ENCODE measurements at regions of chr2 and their contacts with region 1.

Region 1: DNA sequence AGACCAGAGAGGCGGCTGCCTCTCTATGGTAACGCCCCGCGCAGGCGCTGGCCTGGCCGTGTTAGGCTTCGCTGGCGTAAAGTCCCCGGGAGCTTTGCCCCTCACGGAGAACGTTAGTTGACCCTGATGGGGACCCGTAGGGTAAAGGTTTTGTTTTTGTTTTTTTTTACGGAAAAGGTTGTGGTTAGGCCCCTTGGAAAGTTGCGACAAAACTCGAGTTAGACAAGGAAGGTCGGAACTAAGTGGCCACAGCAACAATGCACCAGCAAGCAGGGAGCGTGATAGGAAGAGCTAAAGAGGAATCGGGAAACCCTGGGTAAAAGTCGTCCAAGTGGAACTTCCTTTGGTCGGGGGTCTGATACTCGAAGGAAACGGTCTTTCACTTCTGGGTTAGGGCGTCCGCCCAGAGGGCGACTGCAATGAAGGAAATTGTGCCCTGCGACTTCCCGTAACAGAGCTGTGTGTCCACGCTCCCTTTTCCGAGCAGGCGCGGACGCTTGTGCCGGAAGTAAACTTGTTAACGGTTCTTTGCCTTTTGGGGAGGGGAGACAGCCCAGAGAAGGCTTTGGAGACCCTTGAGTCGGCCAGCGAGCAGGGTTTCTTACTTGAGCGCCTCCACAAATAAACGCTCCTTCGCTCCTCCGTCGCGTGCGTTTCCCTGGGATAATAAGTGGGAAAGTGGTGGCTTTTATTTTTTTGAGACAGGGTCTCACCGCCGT is 493 bp upstream of the CLASP1 start:
- DNase-seq: peak; percentile 98
- ATAC-seq: peak; percentile 93
- H3K4me3 ChIP-seq: peak overlapping the region; percentile 87 to 99 (median 95)
- H3K4me3 Mint-ChIP-seq: peak overlapping the region; percentile 95
- H3K27ac ChIP-seq: peak overlapping the region; percentile 82 to 98
- H3K27ac Mint-ChIP-seq: peak overlapping the region; percentile 98
- H3K4me1 ChIP-seq: peaks cover 21 to 24% of the 10 kb centered on the region in 2 donors
- H3K4me1 Mint-ChIP-seq: peaks cover 50% of the 10 kb centered on the region
- H3K27me3 ChIP-seq: no peaks in the 10 kb centered on the region
- H3K27me3 Mint-ChIP-seq: no peaks in the 10 kb centered on the region
- CTCF ChIP-seq: no peak

Region 2: GRCh38 chr2:121570036-121570666 is 79.6 kb before region 1 on chr2:
- CTCF ChIA-PET with region 1: no interaction called
- POLR2A ChIA-PET with region 1: no interaction called
- intact Hi-C with region 1: no loop called
- DNase-seq: no peak
- ATAC-seq: no peak
- H3K4me3 ChIP-seq: no peak overlapping the region
- H3K4me3 Mint-ChIP-seq: no peak overlapping the region
- H3K27ac ChIP-seq: no peak overlapping the region
- H3K27ac Mint-ChIP-seq: no peak overlapping the region
- H3K4me1 ChIP-seq: no peaks in the 10 kb centered on the region
- H3K4me1 Mint-ChIP-seq: peaks cover 2% of the 10 kb centered on the region
- H3K27me3 ChIP-seq: no peaks in the 10 kb centered on the region
- H3K27me3 Mint-ChIP-seq: no peaks in the 10 kb centered on the region
- CTCF ChIP-seq: no peak

Region 3: DNA sequence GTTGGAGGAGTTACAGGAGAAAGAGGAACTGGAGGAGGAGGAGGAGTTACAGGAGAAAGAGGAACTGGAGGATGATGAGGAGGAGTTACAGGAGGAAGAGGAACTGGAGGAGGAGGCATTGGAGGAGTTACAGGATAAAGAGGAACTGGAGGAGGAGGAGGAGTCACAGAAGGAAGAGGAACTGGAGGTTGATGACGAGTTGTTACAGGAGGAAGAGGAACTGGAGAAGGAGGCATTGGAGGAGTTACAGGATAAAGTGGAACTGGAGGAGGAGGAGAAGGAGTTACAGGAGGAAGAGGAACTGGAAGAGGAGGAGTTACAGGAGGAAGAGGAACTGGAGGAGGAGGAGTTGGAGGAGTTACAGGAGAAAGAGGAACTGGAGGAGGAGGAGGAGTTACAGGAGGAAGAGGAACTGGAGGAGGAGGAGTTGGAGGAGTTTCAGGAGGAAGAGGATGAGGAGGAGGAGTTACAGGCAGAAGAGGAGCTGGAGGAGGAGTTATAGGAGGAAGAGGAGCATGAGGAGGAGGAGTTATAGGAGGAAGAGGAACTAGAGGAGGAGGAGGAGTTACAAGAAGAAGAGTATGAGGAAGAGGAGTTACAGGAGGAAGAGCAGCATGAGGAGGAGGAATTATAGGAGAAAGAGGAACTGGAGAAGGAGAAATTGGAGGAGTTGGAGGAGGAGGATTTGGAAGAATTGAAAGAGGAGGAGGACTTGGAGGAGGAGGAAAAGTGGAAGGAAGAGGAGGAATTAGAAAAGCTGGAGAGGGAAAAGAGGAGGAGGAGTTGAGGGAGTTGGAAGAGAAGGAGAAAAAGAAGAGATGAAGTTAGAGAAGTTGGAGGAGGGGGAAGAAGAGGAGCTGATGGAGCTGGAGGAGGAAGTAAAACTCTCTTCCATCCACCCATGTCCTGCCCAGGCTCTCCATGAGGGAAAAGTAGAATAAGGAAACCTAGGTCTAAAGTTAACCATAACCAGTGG is 37.7 kb before region 1 on chr2:
- CTCF ChIA-PET with region 1: interaction called, 3 read pairs
- POLR2A ChIA-PET with region 1: interaction called, 3 read pairs
- intact Hi-C with region 1: loop called (anchors 1 kb)
- DNase-seq: peak; percentile 80
- ATAC-seq: peak; percentile 41
- H3K4me3 ChIP-seq: peak overlapping the region in 1 of 5 experiments; percentile 37
- H3K4me3 Mint-ChIP-seq: no peak overlapping the region
- H3K27ac ChIP-seq: peak overlapping the region; percentile 51 to 72
- H3K27ac Mint-ChIP-seq: no peak overlapping the region
- H3K4me1 ChIP-seq: peaks cover 7 to 8% of the 10 kb centered on the region in 2 donors
- H3K4me1 Mint-ChIP-seq: peaks cover 17% of the 10 kb centered on the region
- H3K27me3 ChIP-seq: no peaks in the 10 kb centered on the region
- H3K27me3 Mint-ChIP-seq: no peaks in the 10 kb centered on the region
- CTCF ChIP-seq: no peak

Region 4: DNA sequence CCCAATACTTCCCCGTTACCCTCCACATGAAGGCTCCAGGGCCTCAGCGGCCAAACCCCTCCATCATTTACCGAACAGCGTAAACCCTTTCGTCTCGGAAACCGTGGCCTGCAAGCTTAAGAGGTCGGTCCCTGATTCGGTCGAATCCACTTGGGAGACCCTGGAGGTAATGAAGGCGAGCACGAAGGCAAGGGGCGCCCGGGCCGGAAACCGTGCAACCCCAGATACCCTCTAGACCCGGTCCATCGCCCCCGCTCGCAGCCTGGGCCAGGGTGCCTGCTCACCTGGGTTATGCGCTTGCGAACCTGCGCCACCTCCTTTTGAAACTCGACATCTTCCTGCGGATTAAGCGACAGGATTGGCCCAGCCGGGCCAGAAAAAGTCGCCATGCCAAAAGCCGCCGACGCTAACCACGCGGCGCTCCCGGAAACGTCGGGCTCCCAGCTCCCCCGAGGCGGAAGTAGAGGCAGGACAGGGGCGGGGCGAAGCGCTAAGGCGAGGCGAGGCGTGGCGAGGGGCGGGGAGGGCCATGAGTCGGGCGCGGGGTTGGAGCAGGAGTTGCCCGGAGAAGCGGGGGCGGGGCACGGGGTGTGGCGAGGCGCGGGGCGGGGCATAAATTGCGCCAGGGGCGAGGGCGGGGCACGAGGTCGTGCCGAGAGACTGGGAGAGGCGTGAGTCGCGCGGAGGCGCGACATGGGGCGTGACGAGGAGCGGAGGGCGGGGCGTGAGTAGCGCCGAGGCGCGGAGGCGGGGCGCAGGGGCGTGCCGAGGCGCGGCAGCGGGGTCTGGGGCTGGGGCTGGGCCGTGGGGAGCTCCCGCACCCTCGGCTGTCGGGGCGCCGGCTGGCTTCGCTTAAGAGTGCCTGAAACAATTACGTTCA is 86.9 kb after region 1 on chr2 and contains the start of gene NIFK:
- CTCF ChIA-PET with region 1: no interaction called
- POLR2A ChIA-PET with region 1: interaction called, 34 read pairs
- intact Hi-C with region 1: loop called (anchors 1 kb)
- DNase-seq: peak; percentile 99
- ATAC-seq: peak; percentile 95
- H3K4me3 ChIP-seq: peak within 1 kb of the TSS; percentile 84 to 99 (median 98)
- H3K4me3 Mint-ChIP-seq: peak within 1 kb of the TSS; percentile 97
- H3K27ac ChIP-seq: peak within 1 kb of the TSS; percentile 59 to 92
- H3K27ac Mint-ChIP-seq: peak within 1 kb of the TSS; percentile 93
- H3K4me1 ChIP-seq: peaks cover 14 to 20% of the 10 kb centered on the region in 2 donors
- H3K4me1 Mint-ChIP-seq: peaks cover 19% of the 10 kb centered on the region
- H3K27me3 ChIP-seq: no peaks in the 10 kb centered on the region
- H3K27me3 Mint-ChIP-seq: no peaks in the 10 kb centered on the region
- CTCF ChIP-seq: no peak
- total RNA-seq, gene NIFK: 55.3 and 56.3 TPM in 2 replicates

Region 5: DNA sequence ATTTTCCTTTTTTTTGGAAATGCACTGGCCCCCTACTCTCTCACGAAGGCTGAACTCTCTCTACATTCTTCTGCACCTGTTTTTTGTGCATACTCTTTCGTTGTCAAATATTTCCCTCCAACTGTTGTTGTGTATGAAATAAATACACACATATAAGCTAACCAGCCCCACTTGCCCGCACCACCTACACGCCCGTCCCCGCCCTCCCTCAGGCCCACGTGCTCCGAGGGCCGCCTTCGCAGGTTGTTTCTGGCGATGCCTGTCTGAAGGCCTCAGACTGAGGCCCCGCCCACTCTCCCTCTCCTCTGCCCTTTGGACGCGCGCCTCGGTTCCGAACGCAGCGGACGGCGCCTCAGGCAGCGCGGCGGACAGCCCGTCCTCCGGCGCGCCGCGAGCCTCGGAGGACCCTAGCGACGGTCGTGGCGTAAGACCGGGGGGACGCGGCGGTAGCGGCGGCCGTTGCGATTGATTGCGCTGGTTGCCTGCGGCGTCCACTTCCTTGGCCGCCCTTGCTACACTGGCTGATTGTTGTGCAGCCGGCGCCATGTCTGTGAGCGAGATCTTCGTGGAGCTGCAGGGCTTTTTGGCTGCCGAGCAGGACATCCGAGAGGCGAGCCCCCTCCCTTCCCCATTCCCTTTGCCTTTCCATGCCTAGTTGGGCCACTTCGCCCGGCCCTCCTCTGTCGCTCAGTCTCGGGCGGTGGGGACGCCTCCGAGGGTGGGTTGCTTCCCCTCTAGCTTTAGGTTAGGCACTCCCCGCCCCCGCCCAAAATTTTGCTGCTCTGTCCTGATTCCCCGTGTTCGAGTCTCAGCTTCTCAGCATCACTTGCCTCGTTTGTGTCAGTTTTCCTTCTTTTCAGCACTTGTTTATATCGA is 105.7 kb after region 1 on chr2 and contains the start of gene TSN:
- CTCF ChIA-PET with region 1: interaction called, 3 read pairs
- POLR2A ChIA-PET with region 1: interaction called, 3 read pairs
- intact Hi-C with region 1: loop called (anchors 1 kb)
- DNase-seq: peak; percentile 99
- ATAC-seq: peak; percentile 99
- H3K4me3 ChIP-seq: peak within 1 kb of the TSS; percentile 70 to 99 (median 95)
- H3K4me3 Mint-ChIP-seq: peak within 1 kb of the TSS; percentile 90
- H3K27ac ChIP-seq: peak within 1 kb of the TSS; percentile 49 to 84
- H3K27ac Mint-ChIP-seq: peak within 1 kb of the TSS; percentile 96
- H3K4me1 ChIP-seq: peaks cover 14 to 19% of the 10 kb centered on the region in 2 donors
- H3K4me1 Mint-ChIP-seq: peaks cover 27% of the 10 kb centered on the region
- H3K27me3 ChIP-seq: no peaks in the 10 kb centered on the region
- H3K27me3 Mint-ChIP-seq: no peaks in the 10 kb centered on the region
- CTCF ChIP-seq: no peak
- total RNA-seq, gene TSN: 43.4 and 46.0 TPM in 2 replicates

Measured in B cell (primary cell).